Caco-2 (cell line): ENCODE measurements at regions of chr17 and their contacts with region 1.

Region 1: GRCh38 chr17:48513097-48513496 is 17.7 kb downstream of the HOXB1 start:
- DNase-seq: no peak
- H3K4me3 ChIP-seq: no peak overlapping the region
- H3K4me3 Mint-ChIP-seq: peak overlapping the region; percentile 33
- H3K27ac Mint-ChIP-seq: no peak overlapping the region
- H3K4me1 ChIP-seq: peaks cover 49% of the 10 kb centered on the region
- H3K4me1 Mint-ChIP-seq: peaks cover 42% of the 10 kb centered on the region
- H3K27me3 ChIP-seq: no peaks in the 10 kb centered on the region
- H3K27me3 Mint-ChIP-seq: peaks cover 38% of the 10 kb centered on the region
- CTCF ChIP-seq: no peak

Region 2: DNA sequence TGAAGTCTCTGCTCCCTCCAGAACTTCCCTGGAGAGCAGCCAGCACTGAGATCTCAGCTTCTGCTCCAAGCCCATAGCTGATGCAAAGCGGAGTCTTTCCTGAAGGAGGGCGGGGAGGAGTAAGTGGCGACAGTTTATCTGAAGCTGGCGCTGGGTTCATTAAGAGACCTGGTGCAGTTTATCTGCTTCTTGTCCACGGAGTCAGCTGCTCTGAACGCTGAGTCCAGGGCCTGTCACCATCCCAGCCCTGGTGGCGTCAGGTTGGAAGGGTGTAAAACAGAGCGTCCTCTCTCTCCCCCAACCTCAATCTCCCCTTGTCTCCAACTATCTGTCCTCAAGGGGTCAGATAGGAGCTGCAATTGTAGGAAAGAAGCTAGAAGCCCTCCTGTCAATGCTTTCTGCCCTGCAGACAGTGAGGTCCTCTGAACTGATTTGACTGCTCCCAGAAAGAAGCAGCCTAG is 12.1 kb before region 1 on chr17:
- CTCF ChIA-PET with region 1: interaction called, 11 read pairs
- POLR2A ChIA-PET with region 1: no interaction called
- intact Hi-C with region 1: loop called (anchors 1 kb)
- DNase-seq: peak in 1 of 2 experiments; percentile 48
- H3K4me3 ChIP-seq: no peak overlapping the region
- H3K4me3 Mint-ChIP-seq: no peak overlapping the region
- H3K27ac Mint-ChIP-seq: no peak overlapping the region
- H3K4me1 ChIP-seq: peaks cover 39% of the 10 kb centered on the region
- H3K4me1 Mint-ChIP-seq: peaks cover 46% of the 10 kb centered on the region
- H3K27me3 ChIP-seq: no peaks in the 10 kb centered on the region
- H3K27me3 Mint-ChIP-seq: peaks cover 3% of the 10 kb centered on the region
- CTCF ChIP-seq: peak; percentile 22 to 62

Region 3: GRCh38 chr17:48543107-48543853 is 30.2 kb after region 1 on chr17:
- CTCF ChIA-PET with region 1: no interaction called
- POLR2A ChIA-PET with region 1: no interaction called
- intact Hi-C with region 1: no loop called
- DNase-seq: peak; percentile 92
- H3K4me3 ChIP-seq: peak overlapping the region; percentile 55
- H3K4me3 Mint-ChIP-seq: peak overlapping the region; percentile 78
- H3K27ac Mint-ChIP-seq: peak overlapping the region; percentile 31
- H3K4me1 ChIP-seq: peaks cover 10% of the 10 kb centered on the region; the same call in 1 of the 2 replicates
- H3K4me1 Mint-ChIP-seq: peaks cover 11% of the 10 kb centered on the region
- H3K27me3 ChIP-seq: no peaks in the 10 kb centered on the region
- H3K27me3 Mint-ChIP-seq: peaks cover 8% of the 10 kb centered on the region
- CTCF ChIP-seq: peak; percentile 68 to 70